OCI-LY7 (cell line): ENCODE measurements at regions of chr7 and their contacts with region 1.

Region 1: DNA sequence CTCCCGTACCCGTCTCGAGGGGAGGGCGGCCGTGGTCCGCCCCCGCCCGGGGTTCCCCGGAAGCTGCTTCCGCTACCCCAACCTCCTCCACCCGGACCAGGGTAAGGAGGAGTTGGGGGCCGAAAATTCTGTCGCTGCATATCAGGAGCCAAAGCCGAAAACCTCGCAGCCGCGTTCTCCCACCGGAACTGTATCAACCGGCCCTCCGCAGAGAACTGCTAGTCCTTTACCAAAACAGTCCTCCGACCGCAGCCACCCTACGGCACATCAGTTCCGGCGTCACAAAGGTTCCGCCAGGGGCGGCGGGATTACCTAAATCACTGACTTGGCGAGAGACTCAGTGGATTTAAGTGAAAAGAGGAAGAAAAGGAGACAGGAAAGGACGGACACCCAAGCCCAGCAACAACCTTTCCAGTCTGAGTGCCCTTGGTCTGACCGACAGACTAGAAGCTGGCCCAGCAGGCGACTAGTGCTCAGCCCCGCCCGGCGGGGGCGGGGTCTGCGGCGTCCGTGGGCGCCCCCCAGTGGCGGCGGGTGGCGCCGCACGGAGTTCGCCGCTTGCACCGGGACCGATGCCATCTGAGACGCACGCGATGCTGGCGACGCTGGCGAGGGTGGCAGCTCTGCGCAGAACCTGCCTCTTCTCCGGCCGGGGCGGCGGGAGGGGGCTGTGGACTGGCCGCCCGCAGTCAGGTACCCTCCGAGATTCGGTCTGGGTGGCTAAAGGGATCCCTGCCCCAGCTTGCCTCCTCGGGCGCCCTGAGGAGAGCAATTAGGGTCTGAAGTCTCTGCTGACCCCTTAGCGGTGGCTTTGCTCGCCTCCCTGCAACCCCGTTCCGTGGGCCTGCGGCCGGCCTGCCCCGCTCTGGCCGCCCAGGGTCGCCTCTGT is at the starts of genes MPLKIP and SUGCT:
- DNase-seq: peak; percentile 91
- H3K4me3 ChIP-seq: peak within 1 kb of the TSS; percentile 100
- H3K27ac ChIP-seq: peak within 1 kb of the TSS; percentile 89
- H3K4me1 ChIP-seq: peaks cover 18% of the 10 kb centered on the region
- CTCF ChIP-seq: peak; percentile 91
- total RNA-seq, gene MPLKIP: 35.2 and 44.1 TPM in 2 replicates
- total RNA-seq, gene SUGCT: 1.7 TPM in 1 of 2 replicates, not detected in the other

Region 2: GRCh38 chr7:39566023-39566921 is 568.4 kb before region 1 on chr7 and contains the start of gene YAE1:
- CTCF ChIA-PET with region 1: no interaction called
- POLR2A ChIA-PET with region 1: no interaction called
- intact Hi-C with region 1: loop called (anchors 1 kb)
- DNase-seq: peak; percentile 86
- H3K4me3 ChIP-seq: peak within 1 kb of the TSS; percentile 88
- H3K27ac ChIP-seq: peak within 1 kb of the TSS; percentile 38
- H3K4me1 ChIP-seq: peaks cover 14% of the 10 kb centered on the region
- CTCF ChIP-seq: no peak
- total RNA-seq, gene YAE1: 25.5 and 37.5 TPM in 2 replicates

Region 3: GRCh38 chr7:39732837-39733804 is 401.6 kb before region 1 on chr7:
- CTCF ChIA-PET with region 1: no interaction called
- POLR2A ChIA-PET with region 1: no interaction called
- intact Hi-C with region 1: loop called (anchors 5 kb)
- DNase-seq: peak; percentile 94
- H3K4me3 ChIP-seq: peak overlapping the region; percentile 86
- H3K27ac ChIP-seq: peak overlapping the region; percentile 72
- H3K4me1 ChIP-seq: peaks cover 35% of the 10 kb centered on the region
- CTCF ChIP-seq: no peak